BJ (cell line): ENCODE measurements at regions of chr17 and their contacts with region 1.

Region 1: GRCh38 chr17:77054936-77055335 is 85.8 kb upstream of the SEC14L1 start:
- DNase-seq: no peak
- H3K4me3 ChIP-seq: no peak overlapping the region
- H3K27me3 ChIP-seq: peaks cover 36% of the 10 kb centered on the region
- CTCF ChIP-seq: no peak

Region 2: DNA sequence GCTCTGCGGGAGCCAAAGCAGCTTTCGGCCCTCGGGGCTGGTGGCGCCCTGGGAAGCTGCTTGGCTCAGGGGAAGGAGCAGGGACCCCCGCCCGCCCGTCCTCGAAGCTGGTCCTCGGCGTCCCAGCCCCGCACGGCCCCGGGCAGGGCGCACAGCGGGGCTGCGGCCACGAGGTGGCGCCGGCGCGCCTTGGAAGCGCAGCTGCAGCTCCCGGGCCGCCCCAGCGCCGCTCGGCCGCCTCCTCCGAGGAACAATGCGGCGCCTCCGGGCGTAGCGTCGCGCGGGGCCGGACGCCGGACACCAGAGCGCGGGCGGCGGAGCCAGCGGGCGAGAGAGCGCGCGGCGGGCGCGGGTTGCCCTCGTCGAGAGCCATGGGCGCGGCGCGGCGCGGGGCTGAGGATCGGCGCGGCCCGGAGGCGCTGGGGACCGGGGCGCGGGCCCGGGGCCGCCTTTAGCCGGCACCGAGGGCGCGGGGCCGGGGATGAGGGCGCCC is 186.7 kb before region 1 on chr17 and contains the start of gene MGAT5B:
- CTCF ChIA-PET with region 1: interaction called, 176 read pairs
- POLR2A ChIA-PET with region 1: no interaction called
- DNase-seq: no peak
- H3K4me3 ChIP-seq: no peak within 1 kb of the TSS; the same call in 1 of the 2 replicates
- H3K27me3 ChIP-seq: peaks cover 10% of the 10 kb centered on the region
- CTCF ChIP-seq: peak; percentile 19; the same call in 1 of the 2 replicates
- polyA plus RNA-seq, gene MGAT5B: 0.23 and 0.58 TPM in 2 replicates

Region 3: DNA sequence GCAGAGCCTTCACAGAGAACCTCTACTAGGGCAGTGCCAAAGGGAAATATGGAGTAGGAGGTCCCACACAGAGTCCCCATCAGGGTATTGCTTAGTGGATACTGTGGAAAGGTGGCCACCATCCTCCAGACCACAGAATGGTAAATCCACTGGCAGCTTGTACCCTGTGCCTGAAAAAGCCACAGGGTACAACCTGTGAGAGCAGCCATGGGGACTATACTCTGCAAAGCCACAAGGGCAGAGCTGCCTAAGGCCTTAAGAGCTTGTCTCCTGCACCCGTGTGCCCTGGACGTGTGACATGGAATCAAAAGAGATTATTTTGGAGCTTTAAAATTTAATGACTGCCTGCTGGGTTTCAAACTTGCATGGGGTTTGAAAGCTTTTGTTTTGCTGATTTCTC is 32.2 kb before region 1 on chr17:
- CTCF ChIA-PET with region 1: interaction called, 10 read pairs
- POLR2A ChIA-PET with region 1: no interaction called
- DNase-seq: no peak
- H3K4me3 ChIP-seq: no peak overlapping the region
- H3K27me3 ChIP-seq: peaks cover 5% of the 10 kb centered on the region
- CTCF ChIP-seq: no peak

Region 4: GRCh38 chr17:77068915-77069314 is 14.0 kb after region 1 on chr17:
- CTCF ChIA-PET with region 1: interaction called, 74 read pairs
- POLR2A ChIA-PET with region 1: no interaction called
- DNase-seq: no peak
- H3K4me3 ChIP-seq: no peak overlapping the region
- H3K27me3 ChIP-seq: peaks cover 24% of the 10 kb centered on the region
- CTCF ChIP-seq: no peak

Region 5: GRCh38 chr17:77088455-77089123 is 33.7 kb after region 1 on chr17:
- CTCF ChIA-PET with region 1: interaction called, 11 read pairs
- POLR2A ChIA-PET with region 1: no interaction called
- DNase-seq: peak; percentile 89
- H3K4me3 ChIP-seq: peak overlapping the region; percentile 62
- H3K27me3 ChIP-seq: peaks cover 1% of the 10 kb centered on the region; the same call in 1 of the 2 replicates
- CTCF ChIP-seq: peak; percentile 89